SK-N-SH (cell line): ENCODE measurements at regions of chr7 and their contacts with region 1.

Region 1: DNA sequence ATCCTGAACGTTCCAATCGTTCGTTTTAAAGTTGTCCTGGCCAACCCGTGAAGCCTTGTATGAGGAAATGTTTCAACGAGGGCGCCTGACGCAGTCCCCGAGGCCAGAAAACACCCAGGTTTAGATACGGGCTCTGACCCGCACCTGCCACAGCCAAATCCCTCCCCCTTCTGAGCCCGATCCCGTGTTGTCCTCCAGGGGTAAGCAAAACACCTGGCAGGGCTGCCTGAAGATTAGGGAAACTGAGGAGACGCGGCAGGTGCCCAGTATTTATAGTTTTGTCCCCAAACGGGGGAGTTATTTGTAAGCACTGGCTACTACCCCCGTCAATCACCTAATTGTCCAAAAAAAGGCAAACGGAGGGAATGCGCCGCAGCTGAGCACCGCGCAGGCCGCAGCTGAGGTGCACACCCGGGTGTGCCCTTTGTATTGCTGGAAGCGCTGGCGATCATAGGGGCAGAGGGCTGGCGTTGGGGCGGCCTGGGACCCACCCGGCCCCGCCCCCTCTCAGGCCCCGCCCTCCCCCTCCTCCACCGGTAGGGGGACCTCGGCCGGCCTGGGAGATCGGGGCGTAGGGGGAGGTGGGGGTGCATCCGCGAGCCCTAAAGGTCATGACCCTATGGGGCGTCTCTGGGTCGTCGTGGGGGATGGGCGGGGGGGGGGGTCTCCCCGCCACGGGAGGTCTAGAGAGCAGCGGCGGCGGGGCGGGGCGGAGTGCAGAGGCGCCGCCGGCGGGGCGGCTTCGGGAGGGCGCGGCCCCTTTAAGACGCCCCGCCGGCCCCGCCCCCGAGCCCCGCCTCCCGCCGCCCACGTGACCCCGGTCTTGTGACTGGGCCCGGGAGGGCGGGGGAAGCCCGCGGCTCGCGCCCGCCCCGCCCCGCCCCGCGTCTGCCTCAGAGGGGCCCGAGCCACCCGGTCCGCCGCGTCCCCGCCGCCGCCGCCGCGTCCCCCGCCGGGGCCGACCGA is at the start of gene BRI3:
- DNase-seq: peak; percentile 100
- H3K4me3 ChIP-seq: peak within 1 kb of the TSS; percentile 80 to 92
- H3K27ac ChIP-seq: peak within 1 kb of the TSS; percentile 66 to 82
- H3K4me1 ChIP-seq: peaks cover 29 to 56% of the 10 kb centered on the region in 2 experiments; a peak in 3 of 4 replicates
- H3K27me3 ChIP-seq: no peaks in the 10 kb centered on the region
- CTCF ChIP-seq: no peak
- EP300 ChIP-seq: no peak
- RAD21 ChIP-seq: no peak
- polyA plus RNA-seq, gene BRI3: 108 and 128 TPM in 2 replicates

Region 2: DNA sequence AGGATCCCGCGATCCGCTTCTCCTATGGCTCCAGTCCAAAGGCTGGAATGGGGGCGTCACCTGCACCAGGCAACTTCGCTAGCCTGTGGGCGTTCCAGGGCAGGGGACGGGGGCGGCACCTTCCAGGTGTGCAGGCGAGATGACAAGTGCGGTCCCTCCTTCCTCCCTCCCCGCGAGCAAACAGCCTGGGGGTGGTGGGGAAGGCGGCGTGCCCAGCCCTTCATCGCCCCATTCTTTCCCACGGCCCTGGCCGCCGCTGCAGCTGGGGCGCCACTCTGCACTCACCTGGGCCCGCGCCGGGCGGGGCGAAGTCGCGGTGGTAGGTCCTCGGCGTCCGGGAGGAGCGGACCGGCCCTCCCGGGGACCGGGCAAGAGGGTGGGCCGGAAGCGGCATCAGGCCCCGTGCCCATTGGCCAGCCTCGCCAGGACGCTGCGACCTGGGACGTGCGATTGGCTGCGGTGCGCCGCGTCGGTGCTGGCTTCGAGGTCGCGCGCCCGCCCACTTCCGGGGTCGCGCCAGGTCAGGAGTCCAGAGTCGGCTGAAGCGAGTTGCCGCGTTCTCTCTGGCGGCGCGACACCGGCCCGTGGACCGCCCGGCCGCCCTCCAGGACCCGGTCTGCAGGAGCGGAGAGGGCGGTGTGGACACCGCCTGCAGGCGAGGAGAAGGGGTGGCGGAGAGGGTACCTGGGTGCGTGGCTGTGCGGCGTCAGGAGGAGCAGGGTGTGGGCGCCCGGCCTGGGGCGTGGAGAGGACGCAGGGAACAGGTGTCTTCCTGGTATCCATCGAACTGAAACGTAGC is 29.0 kb before region 1 on chr7 and contains the start of gene TECPR1:
- CTCF ChIA-PET with region 1: no interaction called
- POLR2A ChIA-PET with region 1: no interaction called
- DNase-seq: peak; percentile 100
- H3K4me3 ChIP-seq: peak within 1 kb of the TSS; percentile 79 to 100
- H3K27ac ChIP-seq: peak within 1 kb of the TSS; percentile 55 to 68; a peak in 2 of 4 replicates
- H3K4me1 ChIP-seq: peaks cover 15 to 19% of the 10 kb centered on the region in 2 experiments; a peak in 2 of 4 replicates
- H3K27me3 ChIP-seq: no peaks in the 10 kb centered on the region
- CTCF ChIP-seq: no peak
- EP300 ChIP-seq: no peak
- RAD21 ChIP-seq: no peak
- polyA plus RNA-seq, gene TECPR1: 6.6 and 6.8 TPM in 2 replicates

Region 3: GRCh38 chr7:98266840-98267239 is 14.2 kb before region 1 on chr7:
- CTCF ChIA-PET with region 1: interaction called, 26 read pairs
- POLR2A ChIA-PET with region 1: no interaction called
- DNase-seq: peak; percentile 52
- H3K4me3 ChIP-seq: no peak overlapping the region
- H3K27ac ChIP-seq: no peak overlapping the region
- H3K4me1 ChIP-seq: 0 out of 4 replicates have a peak, but pooled peaks cover 0 to 4% of the 10 kb centered on the region in 2 experiments
- H3K27me3 ChIP-seq: no peaks in the 10 kb centered on the region
- CTCF ChIP-seq: peak; percentile 48
- EP300 ChIP-seq: no peak
- RAD21 ChIP-seq: peak; percentile 43

Region 4: GRCh38 chr7:98294796-98295382 is 13.8 kb after region 1 on chr7:
- CTCF ChIA-PET with region 1: interaction called, 27 read pairs
- POLR2A ChIA-PET with region 1: no interaction called
- DNase-seq: peak; percentile 93
- H3K4me3 ChIP-seq: no peak overlapping the region; a peak in 1 of 4 replicates
- H3K27ac ChIP-seq: no peak overlapping the region
- H3K4me1 ChIP-seq: peaks cover 0 to 6% of the 10 kb centered on the region in 2 experiments; a peak in 1 of 4 replicates
- H3K27me3 ChIP-seq: no peaks in the 10 kb centered on the region
- CTCF ChIP-seq: peak; percentile 87
- EP300 ChIP-seq: no peak
- RAD21 ChIP-seq: peak; percentile 90

Region 5: GRCh38 chr7:98448766-98449165 is 167.7 kb after region 1 on chr7:
- CTCF ChIA-PET with region 1: no interaction called
- POLR2A ChIA-PET with region 1: no interaction called
- DNase-seq: no peak
- H3K4me3 ChIP-seq: no peak overlapping the region
- H3K27ac ChIP-seq: no peak overlapping the region
- H3K4me1 ChIP-seq: no peaks in the 10 kb centered on the region
- H3K27me3 ChIP-seq: no peaks in the 10 kb centered on the region
- CTCF ChIP-seq: no peak
- EP300 ChIP-seq: no peak
- RAD21 ChIP-seq: no peak